ENCODE measurements at regions of chr14 and their contacts with region 1.

Region 1: DNA sequence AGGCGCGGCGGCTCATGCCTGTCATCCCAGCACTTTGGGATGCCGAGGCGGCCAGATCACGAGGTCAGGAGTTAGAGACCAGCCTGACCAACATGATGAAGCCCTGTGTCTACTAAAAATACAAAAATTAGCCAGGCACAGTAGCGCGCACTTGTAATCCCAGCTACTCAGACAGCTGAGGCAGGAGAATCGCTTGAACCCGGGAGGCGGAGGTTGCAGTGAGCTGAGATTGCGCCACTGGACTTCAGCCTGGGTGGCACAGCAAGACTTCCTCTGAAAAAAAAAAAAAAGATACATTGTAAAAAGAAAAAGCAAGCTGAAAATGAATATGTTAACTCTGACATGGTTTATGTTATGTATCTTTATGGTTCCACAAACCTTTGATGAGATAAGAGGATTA is 33.6 kb downstream of the RPGRIP1 start:
- DNase-seq: no peak
- H3K4me3 ChIP-seq: no peak overlapping the region
- H3K27ac ChIP-seq: no peak overlapping the region
- H3K4me1 ChIP-seq: no peaks in the 10 kb centered on the region
- H3K27me3 ChIP-seq: no peaks in the 10 kb centered on the region
- CTCF ChIP-seq: no peak
- POLR2A ChIP-seq: no peak

Region 2: DNA sequence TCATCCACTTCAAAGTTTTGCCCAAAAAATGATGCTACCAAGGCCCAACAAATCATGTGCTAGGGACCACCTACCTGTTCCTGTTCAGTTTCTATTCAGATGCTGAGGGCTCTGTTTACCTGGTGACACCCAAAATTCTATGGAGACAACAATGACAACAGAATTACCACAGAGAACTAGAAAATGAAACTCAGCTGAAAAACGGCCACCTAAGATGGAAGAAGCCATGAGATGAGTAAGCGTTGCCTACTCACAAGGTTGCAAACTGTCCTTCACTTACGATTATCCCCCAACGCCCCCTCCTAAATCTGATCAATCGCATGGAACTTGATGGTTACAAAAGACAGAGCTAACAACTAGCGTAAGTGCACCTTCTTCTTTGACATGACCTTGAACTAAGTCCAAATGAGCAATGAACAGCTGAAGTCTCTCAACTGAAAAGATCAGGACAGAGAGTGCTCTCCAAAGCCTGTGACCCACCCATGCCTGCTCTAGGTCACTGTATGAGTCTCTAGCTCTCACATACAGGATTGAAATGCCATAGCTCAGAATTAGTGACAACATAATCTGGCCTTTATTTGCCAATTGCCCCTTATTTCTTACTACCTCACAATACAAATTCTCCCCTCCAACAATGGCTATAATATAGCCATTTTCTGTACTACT is 725.9 kb before region 1 on chr14 and contains the start of gene RNASE11:
- intact Hi-C with region 1: loop called (anchors 5 kb)
- DNase-seq: no peak
- H3K4me3 ChIP-seq: no peak within 1 kb of the TSS
- H3K27ac ChIP-seq: no peak within 1 kb of the TSS
- H3K4me1 ChIP-seq: no peaks in the 10 kb centered on the region
- H3K27me3 ChIP-seq: peaks cover 0 to 3% of the 10 kb centered on the region in 2 donors
- CTCF ChIP-seq: no peak
- POLR2A ChIP-seq: no peak
- total RNA-seq, gene RNASE11: not detected

Measured in breast epithelium (tissue), 4 donors.